PC-9 (cell line): ENCODE measurements at regions of chr16 and their contacts with region 1.

Region 1: DNA sequence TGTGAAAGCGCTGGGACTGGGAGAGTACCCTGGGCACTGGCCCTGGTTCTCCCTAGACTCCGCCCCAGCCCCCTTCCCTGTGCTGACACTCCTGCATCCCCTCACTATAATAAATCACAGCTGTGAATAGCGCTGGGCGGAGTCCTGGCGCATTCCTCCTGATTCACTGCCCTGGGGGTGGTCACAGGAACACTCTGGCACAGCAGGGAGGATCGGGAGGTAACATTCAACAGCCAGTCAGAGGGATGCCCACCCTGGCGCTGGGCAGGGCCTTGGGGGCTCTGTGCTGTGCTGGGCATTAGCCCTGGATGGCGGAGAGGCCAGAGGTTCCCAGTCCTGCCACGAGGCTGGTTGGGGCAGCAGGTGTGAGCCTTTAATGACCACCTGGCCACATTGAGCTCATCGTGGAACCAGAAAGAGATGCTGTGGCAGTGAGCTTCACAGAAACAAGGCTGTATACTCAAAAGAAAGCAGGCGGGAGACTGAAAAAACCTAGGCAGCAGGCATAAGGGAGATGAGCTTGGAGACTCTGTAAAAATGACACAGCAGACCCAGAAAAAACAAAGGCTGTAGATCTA is 45.7 kb downstream of the RMI2 start:
- DNase-seq: peak in 1 of 2 experiments; percentile 38
- H3K4me3 ChIP-seq: no peak overlapping the region
- H3K27ac ChIP-seq: no peak overlapping the region
- H3K4me1 ChIP-seq: 0 out of 2 replicates have a peak, but pooled peaks cover 5% of the 10 kb centered on the region
- H3K27me3 ChIP-seq: no peaks in the 10 kb centered on the region
- CTCF ChIP-seq: no peak

Region 2: GRCh38 chr16:11312718-11313492 is 78.1 kb before region 1 on chr16:
- CTCF ChIA-PET with region 1: no interaction called
- POLR2A ChIA-PET with region 1: no interaction called
- intact Hi-C with region 1: loop called (anchors 2 kb)
- DNase-seq: peak; percentile 84 to 90
- H3K4me3 ChIP-seq: peak overlapping the region; percentile 37; the same call in 1 of the 2 replicates
- H3K27ac ChIP-seq: peak overlapping the region; percentile 73
- H3K4me1 ChIP-seq: peaks cover 29% of the 10 kb centered on the region
- H3K27me3 ChIP-seq: no peaks in the 10 kb centered on the region
- CTCF ChIP-seq: no peak